Prostate gland (tissue), 2 donors: ENCODE measurements at regions of chr5 and their contacts with region 1.

Region 1: DNA sequence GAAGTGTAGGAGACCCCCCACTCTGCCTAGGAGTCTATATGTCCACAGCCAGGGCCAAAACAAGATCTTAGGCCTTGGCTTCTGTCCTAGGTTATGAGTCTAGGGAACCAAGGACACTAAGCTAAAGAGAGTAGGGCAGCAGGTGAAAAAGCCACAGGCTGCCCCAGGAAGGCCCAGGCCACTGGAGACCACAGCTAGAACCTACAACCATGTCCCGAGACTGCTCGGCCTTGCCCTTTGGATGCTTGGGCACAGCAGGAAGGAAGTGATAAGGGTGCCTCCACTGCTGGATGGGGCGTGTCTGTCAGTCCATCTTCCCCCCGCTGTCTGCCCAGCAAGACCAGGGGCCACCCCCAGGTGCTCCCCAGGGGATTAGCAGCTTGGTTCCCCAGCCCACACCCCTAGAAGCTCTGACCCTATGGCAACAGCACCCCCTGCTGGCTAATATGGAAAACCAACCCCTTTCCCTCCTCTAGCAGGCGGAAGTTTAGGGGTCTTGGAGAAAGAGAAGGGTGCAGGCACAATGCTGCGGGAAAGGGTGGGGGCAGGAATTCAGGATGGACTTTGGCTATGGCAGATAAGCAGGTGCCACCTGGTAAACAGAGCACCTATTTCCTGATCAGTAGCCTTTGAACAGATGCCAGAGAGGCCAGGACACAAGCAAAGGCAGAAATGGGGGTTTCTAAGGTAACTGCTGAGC is 10.5 kb upstream of the IRF1 start:
- DNase-seq: peak; percentile 33
- H3K4me3 ChIP-seq: no peak overlapping the region
- H3K27ac ChIP-seq: peak overlapping the region in 1 of 2 donors; percentile 38
- H3K4me1 ChIP-seq: peaks cover 2% of the 10 kb centered on the region
- H3K27me3 ChIP-seq: no peaks in the 10 kb centered on the region
- CTCF ChIP-seq: peak; percentile 78 to 92 (median 90)
- POLR2A ChIP-seq: no peak

Region 2: DNA sequence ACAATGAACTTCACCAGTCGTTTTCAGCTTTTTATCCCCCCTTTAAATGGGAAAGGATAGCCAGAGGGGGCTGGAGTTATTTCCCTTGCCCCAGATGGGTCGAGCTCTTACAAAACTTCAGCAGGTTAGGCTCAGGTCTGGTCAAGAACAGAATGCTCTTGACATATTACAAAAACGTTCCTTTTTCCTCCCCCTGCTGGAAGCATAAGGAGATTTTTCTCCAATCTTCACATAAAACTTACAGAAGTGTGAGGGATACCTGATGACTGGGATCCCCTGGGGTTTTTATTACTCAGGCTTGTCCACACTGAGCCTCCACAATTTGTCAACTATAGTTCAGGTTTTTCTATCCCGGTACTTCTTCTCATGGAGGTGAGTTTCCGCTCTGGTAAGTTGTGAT is 366.7 kb before region 1 on chr5:
- intact Hi-C with region 1: no loop called
- DNase-seq: no peak
- H3K4me3 ChIP-seq: no peak overlapping the region
- H3K27ac ChIP-seq: no peak overlapping the region
- H3K4me1 ChIP-seq: no peaks in the 10 kb centered on the region
- H3K27me3 ChIP-seq: no peaks in the 10 kb centered on the region
- CTCF ChIP-seq: no peak
- POLR2A ChIP-seq: no peak

Region 3: GRCh38 chr5:132386644-132387286 is 114.3 kb before region 1 on chr5:
- intact Hi-C with region 1: loop called (anchors 1 kb)
- DNase-seq: peak; percentile 68
- H3K4me3 ChIP-seq: no peak overlapping the region
- H3K27ac ChIP-seq: peak overlapping the region; percentile 89 to 92
- H3K4me1 ChIP-seq: peaks cover 31% of the 10 kb centered on the region
- H3K27me3 ChIP-seq: no peaks in the 10 kb centered on the region
- CTCF ChIP-seq: peak; percentile 67 to 93 (median 87)
- POLR2A ChIP-seq: no peak

Region 4: DNA sequence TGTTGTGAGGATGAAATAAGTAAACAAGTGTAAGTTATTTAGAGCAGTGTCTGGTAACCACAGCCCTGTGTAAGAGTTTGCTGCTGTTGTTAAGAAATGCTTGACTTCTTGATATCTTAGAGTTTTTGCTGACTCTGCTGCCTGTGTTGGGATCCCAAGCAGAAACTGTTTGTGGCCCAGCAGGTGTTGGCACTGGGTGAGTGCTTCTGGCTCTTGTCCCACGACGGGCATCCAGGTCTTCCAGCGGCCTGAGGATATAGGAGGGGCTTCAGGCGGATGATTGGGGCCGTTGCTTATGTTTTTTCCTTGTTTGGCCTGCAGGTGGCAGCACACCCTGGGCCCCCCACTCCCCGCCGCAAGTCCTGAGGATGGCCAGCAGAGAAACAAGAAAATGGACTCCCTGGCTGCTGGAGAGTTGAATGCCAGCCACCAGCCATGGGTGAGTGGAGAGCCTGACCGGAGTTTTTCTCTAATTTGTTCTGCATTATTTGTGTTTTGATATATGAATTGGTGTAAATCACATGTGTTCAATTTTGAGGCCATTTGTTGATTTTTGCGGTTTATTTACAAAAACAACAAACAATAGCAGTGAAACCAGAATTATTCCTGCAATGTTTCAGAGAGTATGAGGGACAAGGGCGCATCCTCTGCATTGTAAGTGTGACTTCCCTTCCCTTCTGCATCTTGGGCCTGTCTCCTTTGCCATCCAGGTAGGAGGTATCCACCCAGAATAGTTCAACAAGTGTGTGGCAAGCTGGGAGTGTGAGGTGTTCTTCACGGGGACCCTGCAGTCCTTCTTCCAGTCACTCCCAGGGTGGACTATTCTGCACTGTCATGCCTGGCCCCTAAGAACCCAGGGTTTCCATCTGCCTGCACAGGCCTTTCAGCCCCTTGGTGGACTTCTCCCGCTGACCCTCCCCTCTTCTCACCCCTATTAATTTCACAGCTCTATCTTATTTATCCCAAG is 81.3 kb before region 1 on chr5:
- intact Hi-C with region 1: loop called (anchors 2 kb)
- DNase-seq: peak; percentile 67
- H3K4me3 ChIP-seq: no peak overlapping the region
- H3K27ac ChIP-seq: peak overlapping the region in 1 of 2 donors; percentile 50
- H3K4me1 ChIP-seq: peaks cover 11% of the 10 kb centered on the region
- H3K27me3 ChIP-seq: no peaks in the 10 kb centered on the region
- CTCF ChIP-seq: peak; percentile 83 to 91 (median 88)
- POLR2A ChIP-seq: no peak

Region 5: GRCh38 chr5:132612846-132613245 is 111.8 kb after region 1 on chr5:
- intact Hi-C with region 1: no loop called
- DNase-seq: no peak
- H3K4me3 ChIP-seq: no peak overlapping the region
- H3K27ac ChIP-seq: no peak overlapping the region
- H3K4me1 ChIP-seq: no peaks in the 10 kb centered on the region
- H3K27me3 ChIP-seq: no peaks in the 10 kb centered on the region
- CTCF ChIP-seq: no peak
- POLR2A ChIP-seq: no peak